ENCODE measurements at regions of chr11 and their contacts with region 1.

Region 1: DNA sequence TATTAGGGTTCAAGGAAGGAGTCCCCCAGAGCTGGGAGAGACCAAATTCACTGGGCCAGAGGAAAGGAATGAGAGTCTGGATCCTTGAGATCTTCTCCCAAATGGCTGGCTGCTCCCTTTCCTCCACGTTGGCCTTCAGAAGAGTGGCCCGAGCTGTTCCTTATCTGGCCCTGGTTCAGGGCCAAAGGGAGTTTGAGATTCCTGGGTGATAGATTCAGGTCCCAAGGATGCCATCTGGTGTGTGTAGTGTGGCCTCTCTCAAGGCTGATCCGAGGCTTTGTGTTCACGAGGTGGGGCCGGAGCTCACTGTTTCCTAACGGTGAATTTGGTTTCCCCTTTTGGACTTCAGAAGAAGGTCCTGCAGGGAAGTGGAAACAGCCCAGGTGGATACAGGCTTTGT is 17.4 kb upstream of the ABCC8 start:
- DNase-seq: no peak
- ATAC-seq: no peak
- H3K4me3 Mint-ChIP-seq: no peak overlapping the region
- H3K27ac Mint-ChIP-seq: no peak overlapping the region
- H3K4me1 Mint-ChIP-seq: no peaks in the 10 kb centered on the region
- H3K27me3 Mint-ChIP-seq: peaks cover 10% of the 10 kb centered on the region

Region 2: GRCh38 chr11:17504330-17505107 is 10.5 kb after region 1 on chr11:
- CTCF ChIA-PET with region 1: interaction called, 14 read pairs
- DNase-seq: peak; percentile 79
- ATAC-seq: peak; percentile 83
- H3K4me3 Mint-ChIP-seq: no peak overlapping the region
- H3K27ac Mint-ChIP-seq: no peak overlapping the region
- H3K4me1 Mint-ChIP-seq: no peaks in the 10 kb centered on the region
- H3K27me3 Mint-ChIP-seq: peaks cover 7% of the 10 kb centered on the region